ENCODE measurements at regions of chr4 and their contacts with region 1.

Region 1: DNA sequence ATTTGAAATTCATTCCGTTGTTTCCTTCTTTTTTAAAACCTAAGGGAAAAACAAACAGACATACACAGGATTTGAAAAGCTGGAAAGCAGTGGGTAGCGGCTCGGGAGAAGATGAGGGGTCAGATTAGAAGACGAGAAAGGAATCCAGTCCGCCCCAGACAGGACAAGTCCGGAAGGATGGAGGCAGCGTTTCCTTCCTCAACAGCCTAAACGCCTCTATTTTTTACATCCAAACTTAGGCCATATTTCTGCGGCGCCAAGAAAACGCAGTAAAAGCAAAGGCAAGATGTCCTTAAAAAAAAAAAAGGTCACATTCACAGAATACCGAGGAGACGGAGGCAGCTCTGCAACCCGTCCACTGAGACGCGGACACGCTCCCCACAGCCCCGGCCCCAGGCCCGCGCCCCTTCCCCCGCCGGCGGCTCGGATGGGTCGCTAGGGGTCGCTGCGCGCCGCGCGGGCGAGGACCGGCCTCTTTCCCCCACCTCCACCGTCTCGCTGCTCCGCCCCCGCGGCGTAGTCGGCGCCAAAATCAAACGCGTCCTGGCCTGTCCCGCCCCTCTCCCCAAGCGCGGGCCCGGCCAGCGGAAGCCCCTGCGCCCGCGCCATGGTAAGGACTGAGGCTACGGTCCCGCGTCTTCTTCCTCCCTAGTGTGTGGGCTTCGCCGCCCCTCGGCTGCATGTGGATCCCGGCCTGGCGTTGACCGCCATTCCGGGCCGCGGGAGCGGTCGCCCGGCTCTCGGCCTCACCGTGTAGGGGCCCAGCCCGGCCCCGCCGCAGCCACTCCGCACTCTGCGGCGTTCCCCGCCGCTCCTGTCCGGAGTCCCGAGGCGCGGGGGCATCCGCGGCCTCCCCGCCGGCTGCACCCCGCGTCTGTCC is at the start of gene MND1:
- DNase-seq: no peak
- ATAC-seq: peak; percentile 97
- H3K4me3 ChIP-seq: peak within 1 kb of the TSS; percentile 71 to 77
- H3K27ac ChIP-seq: peak within 1 kb of the TSS; percentile 89
- H3K4me1 ChIP-seq: peaks cover 18% of the 10 kb centered on the region
- H3K27me3 ChIP-seq: no peaks in the 10 kb centered on the region
- CTCF ChIP-seq: peak; percentile 95
- total RNA-seq, gene MND1: 9.4 TPM

Region 2: GRCh38 chr4:153204247-153205027 is 139.9 kb before region 1 on chr4 and contains the start of gene TRIM2:
- CTCF ChIA-PET with region 1: no interaction called
- POLR2A ChIA-PET with region 1: no interaction called
- in situ Hi-C with region 1: no loop called
- intact Hi-C with region 1: no loop called
- DNase-seq: no peak
- ATAC-seq: peak; percentile 71
- H3K4me3 ChIP-seq: peak within 1 kb of the TSS; percentile 25 to 40
- H3K27ac ChIP-seq: peak within 1 kb of the TSS; percentile 68
- H3K4me1 ChIP-seq: peaks cover 29% of the 10 kb centered on the region
- H3K27me3 ChIP-seq: no peaks in the 10 kb centered on the region
- CTCF ChIP-seq: no peak
- total RNA-seq, gene TRIM2: 18.9 TPM

Region 3: GRCh38 chr4:153374442-153374841 is 30.1 kb after region 1 on chr4:
- CTCF ChIA-PET with region 1: no interaction called
- POLR2A ChIA-PET with region 1: no interaction called
- in situ Hi-C with region 1: no loop called
- intact Hi-C with region 1: no loop called
- DNase-seq: no peak
- ATAC-seq: no peak
- H3K4me3 ChIP-seq: no peak overlapping the region
- H3K27ac ChIP-seq: no peak overlapping the region
- H3K4me1 ChIP-seq: no peaks in the 10 kb centered on the region
- H3K27me3 ChIP-seq: no peaks in the 10 kb centered on the region
- CTCF ChIP-seq: no peak

Region 4: GRCh38 chr4:153393397-153393796 is 49.0 kb after region 1 on chr4:
- CTCF ChIA-PET with region 1: no interaction called
- POLR2A ChIA-PET with region 1: no interaction called
- in situ Hi-C with region 1: no loop called
- intact Hi-C with region 1: no loop called
- DNase-seq: no peak
- ATAC-seq: no peak
- H3K4me3 ChIP-seq: no peak overlapping the region
- H3K27ac ChIP-seq: no peak overlapping the region
- H3K4me1 ChIP-seq: no peaks in the 10 kb centered on the region
- H3K27me3 ChIP-seq: no peaks in the 10 kb centered on the region
- CTCF ChIP-seq: no peak

Region 5: DNA sequence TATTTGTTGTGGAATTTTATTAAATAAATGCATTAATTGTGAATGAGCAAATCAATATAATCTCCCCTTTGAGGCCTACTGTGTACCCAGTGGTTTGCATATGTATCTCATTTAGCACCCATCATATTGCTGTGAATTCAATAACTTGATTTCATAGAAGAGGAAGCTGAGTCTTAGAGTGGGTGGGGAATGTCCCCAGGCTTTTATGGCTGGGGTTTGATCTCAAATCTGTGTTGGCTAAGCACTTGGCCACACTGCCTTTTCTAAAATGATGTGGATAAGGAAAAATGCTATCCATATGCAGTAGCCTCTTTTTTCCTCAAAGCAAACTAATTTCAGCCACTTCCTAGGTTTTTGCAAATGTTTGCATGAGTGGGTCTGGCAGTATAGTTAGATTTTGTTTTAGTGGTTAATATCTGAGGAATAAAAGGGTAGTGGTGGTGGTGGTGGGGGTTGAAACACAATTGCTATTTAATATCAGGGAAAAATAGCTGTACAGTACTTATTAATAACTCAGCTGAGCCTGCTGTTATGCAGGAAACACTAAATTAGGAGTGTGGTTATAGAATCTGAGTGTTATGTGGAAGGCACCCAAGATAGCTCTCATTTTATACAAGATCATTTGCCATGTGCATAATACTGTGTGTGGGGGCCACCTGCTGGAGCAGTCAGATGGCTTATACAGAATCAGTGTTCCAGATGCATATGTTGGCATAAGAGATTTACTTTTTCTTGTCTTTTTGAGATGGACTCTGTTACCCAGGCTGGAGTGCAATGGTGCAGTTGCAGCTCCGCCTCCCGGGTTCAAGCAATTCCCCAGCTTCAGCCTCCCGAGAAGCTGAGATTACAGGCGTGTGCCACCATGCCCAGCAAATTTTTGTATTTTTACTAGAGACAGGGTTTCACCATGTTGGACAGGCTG is 229.8 kb after region 1 on chr4:
- CTCF ChIA-PET with region 1: no interaction called
- POLR2A ChIA-PET with region 1: no interaction called
- in situ Hi-C with region 1: no loop called
- intact Hi-C with region 1: loop called (anchors 2 kb)
- DNase-seq: peak; percentile 25
- ATAC-seq: peak; percentile 88
- H3K4me3 ChIP-seq: no peak overlapping the region
- H3K27ac ChIP-seq: no peak overlapping the region
- H3K4me1 ChIP-seq: no peaks in the 10 kb centered on the region
- H3K27me3 ChIP-seq: no peaks in the 10 kb centered on the region
- CTCF ChIP-seq: peak; percentile 68

Region 6: DNA sequence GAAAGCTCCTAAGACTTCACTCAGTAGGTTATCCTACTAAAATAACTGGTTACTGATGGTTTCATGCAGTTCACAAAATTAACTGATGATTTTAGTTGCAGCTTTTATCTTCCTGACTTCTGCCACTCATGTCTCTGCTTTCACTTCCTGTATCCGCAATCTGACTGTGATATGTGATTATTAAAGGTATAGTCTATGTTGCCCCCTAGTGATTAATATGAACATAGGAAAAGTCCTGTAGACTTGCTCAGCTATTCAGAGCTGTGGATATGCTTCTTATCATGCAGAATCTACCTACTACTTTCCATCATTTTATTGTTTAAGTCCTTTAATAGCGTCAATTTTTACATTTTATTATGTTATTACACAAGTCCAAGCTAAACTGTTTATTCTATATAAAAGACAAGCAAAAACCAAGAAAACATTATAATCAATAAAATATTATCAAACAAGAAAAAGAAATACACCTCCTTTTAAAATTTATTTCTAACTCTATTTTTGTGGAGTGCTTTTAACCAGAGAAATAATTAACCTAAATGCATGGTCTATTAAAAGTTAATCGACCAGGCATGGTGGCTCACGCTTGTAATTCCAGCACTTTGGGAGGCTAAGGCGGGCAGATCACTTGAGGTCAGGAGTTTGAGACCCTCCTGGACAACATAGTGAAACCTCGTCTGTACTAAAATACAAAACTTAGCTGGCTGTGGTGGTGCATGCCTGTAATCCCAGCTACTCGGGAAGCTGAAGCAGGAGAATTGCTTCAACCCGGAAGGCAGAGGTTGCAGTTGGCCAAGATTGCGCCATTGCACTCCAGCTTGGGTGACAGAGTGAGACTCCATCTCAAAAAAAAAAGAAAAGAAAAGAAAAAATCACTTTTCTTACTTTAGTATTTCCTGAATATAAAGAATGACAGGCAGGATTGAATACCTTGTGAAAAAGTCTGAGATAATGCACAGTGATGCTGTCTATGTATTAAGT is 299.3 kb after region 1 on chr4:
- CTCF ChIA-PET with region 1: no interaction called
- POLR2A ChIA-PET with region 1: no interaction called
- in situ Hi-C with region 1: no loop called
- intact Hi-C with region 1: loop called (anchors 5 kb)
- DNase-seq: no peak
- ATAC-seq: peak; percentile 92
- H3K4me3 ChIP-seq: no peak overlapping the region
- H3K27ac ChIP-seq: no peak overlapping the region
- H3K4me1 ChIP-seq: no peaks in the 10 kb centered on the region
- H3K27me3 ChIP-seq: no peaks in the 10 kb centered on the region
- CTCF ChIP-seq: peak; percentile 49; the same call in 1 of the 2 replicates

Region 7: GRCh38 chr4:153750197-153750817 is 405.9 kb after region 1 on chr4:
- CTCF ChIA-PET with region 1: no interaction called
- POLR2A ChIA-PET with region 1: no interaction called
- in situ Hi-C with region 1: no loop called
- intact Hi-C with region 1: loop called (anchors 10 kb)
- DNase-seq: peak; percentile 47
- ATAC-seq: peak; percentile 90
- H3K4me3 ChIP-seq: no peak overlapping the region
- H3K27ac ChIP-seq: no peak overlapping the region
- H3K4me1 ChIP-seq: no peaks in the 10 kb centered on the region
- H3K27me3 ChIP-seq: no peaks in the 10 kb centered on the region
- CTCF ChIP-seq: peak; percentile 78

Measured in Panc1 (cell line).